ENCODE measurements at regions of chr1 and their contacts with region 1.

Region 1: GRCh38 chr1:156383023-156383422 is 14.0 kb downstream of the RHBG start:
- DNase-seq: peak; percentile 67 to 89
- H3K4me3 ChIP-seq: no peak overlapping the region
- H3K27ac ChIP-seq: no peak overlapping the region
- H3K4me1 ChIP-seq: peaks cover 4 to 7% (median 6%) of the 10 kb centered on the region in 4 experiments; a peak in 6 of 7 replicates
- H3K27me3 ChIP-seq: peaks cover 10 to 24% (median 22%) of the 10 kb centered on the region in 4 experiments
- CTCF ChIP-seq: peak in 2 of 3 experiments; percentile 94 to 100; a peak in 3 of 4 replicates
- EP300 ChIP-seq: no peak
- POLR2A ChIP-seq: no peak
- RAD21 ChIP-seq: peak; percentile 92 to 96

Region 2: DNA sequence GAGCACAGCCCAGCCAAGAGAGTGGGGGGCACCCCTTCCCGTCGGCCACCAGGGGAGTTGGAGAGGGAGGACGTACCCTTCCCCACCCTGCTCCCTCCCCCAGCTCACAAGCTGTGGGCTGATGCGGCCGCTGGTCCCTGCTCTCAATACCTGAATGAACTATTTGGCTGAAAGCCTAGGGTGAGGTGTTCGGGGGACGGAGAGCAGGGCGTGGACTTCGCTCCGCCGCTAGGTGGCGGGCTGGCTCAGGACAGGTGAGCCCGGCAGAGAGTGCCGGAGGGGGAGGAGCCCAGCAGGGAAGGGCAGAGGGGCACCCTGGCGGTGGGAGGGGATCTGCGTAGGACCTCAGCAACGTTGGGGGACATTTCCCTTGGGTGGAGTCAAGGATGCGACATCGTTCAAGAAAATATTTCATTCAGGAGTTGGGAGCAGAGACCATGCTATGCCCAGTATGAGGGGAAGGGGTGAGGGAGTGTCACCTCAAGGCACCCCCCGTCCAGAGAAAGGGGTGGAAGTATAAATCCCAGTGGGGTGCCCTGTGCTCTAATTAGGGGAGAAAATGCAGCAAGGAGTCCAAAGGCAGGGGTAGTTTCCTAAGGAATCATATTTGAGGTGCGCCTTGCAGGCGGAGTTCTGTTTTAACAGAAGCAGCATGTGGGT is 26.0 kb before region 1 on chr1:
- CTCF ChIA-PET with region 1: interaction called, 27 read pairs
- POLR2A ChIA-PET with region 1: interaction called, 3 read pairs
- DNase-seq: peak; percentile 84 to 92
- H3K4me3 ChIP-seq: peak overlapping the region; percentile 27 to 58 (median 42); a peak in 6 of 8 replicates
- H3K27ac ChIP-seq: no peak overlapping the region
- H3K4me1 ChIP-seq: peaks cover 0 to 4% (median 2%) of the 10 kb centered on the region in 4 experiments; a peak in 3 of 7 replicates
- H3K27me3 ChIP-seq: no peaks in the 10 kb centered on the region; a peak in 1 of 7 replicates
- CTCF ChIP-seq: peak; percentile 95 to 99 (median 95)
- EP300 ChIP-seq: peak in 1 of 2 experiments; percentile 40; a peak in 1 of 3 replicates
- POLR2A ChIP-seq: peak in 1 of 2 experiments; percentile 41; a peak in 1 of 3 replicates
- RAD21 ChIP-seq: peak; percentile 55 to 69

Region 3: DNA sequence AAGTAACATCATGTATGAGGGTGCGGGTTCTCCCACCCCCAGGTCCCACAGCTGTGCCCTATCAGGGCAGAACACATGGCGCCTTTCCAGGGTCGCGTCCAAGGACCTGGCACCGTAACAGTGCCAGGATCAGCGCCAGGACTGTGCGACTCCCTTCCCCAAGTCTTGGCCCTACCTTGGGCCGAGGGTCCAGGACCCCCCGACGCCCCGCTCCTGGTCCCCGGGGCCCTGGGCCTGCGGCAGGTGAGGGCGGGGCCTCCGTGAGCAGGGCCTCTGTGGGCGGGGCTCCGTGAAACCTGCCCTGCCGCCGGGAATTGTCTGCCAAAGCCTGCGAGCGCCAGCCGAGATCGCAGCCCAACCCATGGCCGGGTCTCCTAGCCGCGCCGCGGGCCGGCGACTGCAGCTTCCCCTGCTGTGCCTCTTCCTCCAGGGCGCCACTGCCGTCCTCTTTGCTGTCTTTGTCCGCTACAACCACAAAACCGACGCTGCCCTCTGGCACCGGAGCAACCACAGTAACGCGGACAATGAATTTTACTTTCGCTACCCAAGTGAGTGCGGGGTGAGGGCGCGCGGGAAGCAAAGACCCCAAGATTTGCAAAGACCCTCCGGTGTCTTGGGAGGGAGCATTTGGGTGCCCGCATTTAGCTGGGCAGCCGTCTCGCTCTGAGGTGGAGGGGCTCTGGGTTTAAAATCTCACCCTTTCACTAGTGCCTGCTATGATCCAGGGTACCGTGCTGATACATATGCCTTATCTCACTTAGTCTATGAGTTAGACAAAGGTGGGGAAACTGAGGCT is 13.9 kb before region 1 on chr1 and contains the start of gene RHBG:
- CTCF ChIA-PET with region 1: interaction called, 156 read pairs
- POLR2A ChIA-PET with region 1: interaction called, 7 read pairs
- DNase-seq: peak in 1 of 2 experiments; percentile 88
- H3K4me3 ChIP-seq: peak within 1 kb of the TSS; percentile 52 to 66 (median 56)
- H3K27ac ChIP-seq: no peak within 1 kb of the TSS
- H3K4me1 ChIP-seq: peaks cover 0 to 7% (median 4%) of the 10 kb centered on the region in 4 experiments; a peak in 5 of 7 replicates
- H3K27me3 ChIP-seq: peaks cover 0 to 14% (median 11%) of the 10 kb centered on the region in 4 experiments; a peak in 6 of 7 replicates
- CTCF ChIP-seq: no peak
- EP300 ChIP-seq: no peak
- POLR2A ChIP-seq: peak in 1 of 2 experiments; percentile 44; a peak in 1 of 3 replicates
- RAD21 ChIP-seq: no peak
- total RNA-seq, gene RHBG: 2.2 and 2.6 TPM in 2 replicates

Region 4: DNA sequence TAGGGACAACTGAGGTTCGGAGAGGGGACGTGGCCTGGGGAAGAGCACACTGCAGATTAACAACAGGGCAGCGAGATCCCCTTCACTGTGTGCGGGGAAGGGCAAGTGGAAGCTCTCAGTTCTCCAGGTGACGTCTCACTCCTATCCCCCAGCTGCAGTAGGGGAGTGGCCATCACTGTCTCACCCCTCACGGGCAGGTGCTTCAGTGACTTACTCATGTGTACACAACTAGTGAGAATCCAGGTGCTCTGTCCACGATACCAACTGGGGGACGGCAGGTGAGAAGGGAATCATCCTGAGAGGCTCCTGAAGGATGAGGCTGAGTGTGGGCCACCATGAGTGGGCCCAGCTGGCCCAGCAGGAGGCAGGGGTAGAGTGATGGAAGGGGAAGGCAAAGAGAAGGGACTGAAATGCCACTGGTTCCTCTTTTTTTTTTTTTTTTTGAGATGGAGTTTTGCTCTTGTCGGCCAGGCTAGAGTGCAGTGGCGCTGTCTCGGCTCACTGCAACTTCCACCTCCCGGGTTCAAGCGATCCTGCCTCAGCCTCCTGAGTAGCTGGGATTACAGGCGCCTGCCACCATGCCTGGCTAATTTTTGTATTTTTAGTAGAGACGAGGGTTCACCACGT is 11.9 kb after region 1 on chr1:
- CTCF ChIA-PET with region 1: interaction called, 172 read pairs
- POLR2A ChIA-PET with region 1: interaction called, 3 read pairs
- DNase-seq: no peak
- H3K4me3 ChIP-seq: no peak overlapping the region
- H3K27ac ChIP-seq: no peak overlapping the region
- H3K4me1 ChIP-seq: peaks cover 15 to 36% (median 26%) of the 10 kb centered on the region in 4 experiments
- H3K27me3 ChIP-seq: peaks cover 0 to 24% (median 19%) of the 10 kb centered on the region in 4 experiments; a peak in 6 of 7 replicates
- CTCF ChIP-seq: no peak
- EP300 ChIP-seq: no peak
- POLR2A ChIP-seq: no peak
- RAD21 ChIP-seq: no peak

Region 5: DNA sequence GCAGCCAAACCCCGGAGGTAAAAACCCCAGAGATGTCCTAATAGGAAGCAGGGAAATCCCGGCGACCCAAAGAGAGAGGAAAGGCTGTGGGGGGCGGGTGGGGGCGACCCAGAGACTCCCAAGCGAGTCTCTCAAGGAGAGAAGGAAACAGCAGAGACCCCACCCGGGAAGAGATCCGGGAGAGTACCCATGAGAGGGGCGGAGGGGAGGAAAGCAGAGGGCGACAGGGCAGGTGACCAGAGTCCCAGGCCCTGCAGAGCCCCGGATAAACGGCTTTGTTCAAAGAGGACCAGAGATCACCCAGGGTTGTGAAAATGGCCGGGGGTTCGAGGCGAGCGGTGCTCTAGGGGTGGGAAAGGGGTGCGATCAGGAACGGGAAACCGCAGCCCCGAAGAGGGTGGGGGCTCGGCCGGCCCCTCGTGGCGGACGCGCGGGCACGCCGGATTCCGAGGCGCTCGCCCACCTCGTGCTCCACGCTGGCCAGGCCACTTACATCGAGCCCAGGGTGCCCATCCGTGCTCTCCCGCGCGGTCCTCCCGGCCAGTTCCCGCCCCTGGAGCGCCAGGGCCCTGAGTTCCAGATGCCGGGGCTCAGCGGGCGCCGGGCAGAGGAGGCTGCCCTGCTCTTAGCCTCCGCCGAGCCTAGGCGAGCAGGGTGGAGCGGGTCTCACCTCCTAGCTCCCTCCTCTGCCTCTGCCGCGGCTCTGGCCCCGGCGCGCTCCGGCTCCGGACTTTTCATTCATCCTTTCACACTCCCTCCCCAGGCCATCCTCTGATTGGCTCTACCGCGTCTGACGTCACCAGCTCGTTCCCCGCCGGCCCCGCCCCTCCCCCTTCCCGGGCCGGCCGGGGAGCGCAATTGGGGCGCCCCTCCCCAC is 38.3 kb after region 1 on chr1:
- CTCF ChIA-PET with region 1: interaction called, 517 read pairs
- POLR2A ChIA-PET with region 1: interaction called, 26 read pairs
- DNase-seq: peak in 1 of 2 experiments; percentile 93
- H3K4me3 ChIP-seq: peak overlapping the region; percentile 35 to 61 (median 45)
- H3K27ac ChIP-seq: peak overlapping the region; percentile 4; the same call in 1 of the 2 replicates
- H3K4me1 ChIP-seq: peaks cover 10 to 26% (median 16%) of the 10 kb centered on the region in 4 experiments
- H3K27me3 ChIP-seq: peaks cover 43 to 73% (median 65%) of the 10 kb centered on the region in 4 experiments
- CTCF ChIP-seq: no peak
- EP300 ChIP-seq: peak in 1 of 2 experiments; percentile 9; a peak in 1 of 3 replicates
- POLR2A ChIP-seq: peak; percentile 69 to 87
- RAD21 ChIP-seq: no peak

Region 6: DNA sequence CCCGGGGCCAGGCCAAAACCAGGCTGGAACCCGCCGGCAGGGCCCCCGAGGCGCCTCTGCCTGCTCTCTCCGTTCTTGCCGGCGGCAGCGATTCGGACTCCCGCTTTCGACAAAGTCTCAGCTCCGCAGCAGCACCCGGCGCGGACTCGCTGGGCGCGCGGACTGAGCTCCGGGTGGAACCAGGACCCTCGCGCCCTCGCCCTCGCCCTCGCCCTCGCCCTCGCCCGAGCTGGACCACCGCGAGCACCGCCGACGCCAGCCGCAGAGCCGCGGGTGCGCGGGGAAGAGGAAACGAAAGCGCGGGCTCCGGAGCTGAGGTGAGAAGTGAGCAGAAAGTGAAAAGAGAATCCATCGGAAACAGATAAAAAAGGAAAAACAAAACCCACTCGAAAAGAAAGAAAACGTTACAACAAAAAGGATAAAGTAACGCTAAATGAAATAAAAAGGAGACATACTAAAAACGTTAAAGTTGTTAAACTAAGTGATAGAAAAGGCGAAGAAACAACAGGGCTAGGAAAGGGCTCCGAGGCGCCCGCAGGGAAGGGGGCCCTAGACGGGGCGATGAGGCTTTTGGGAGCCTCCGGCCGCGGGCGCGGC is 52.6 kb after region 1 on chr1:
- CTCF ChIA-PET with region 1: interaction called, 217 read pairs
- POLR2A ChIA-PET with region 1: interaction called, 8 read pairs
- DNase-seq: no peak
- H3K4me3 ChIP-seq: peak overlapping the region in 1 of 4 experiments; percentile 39; a peak in 2 of 8 replicates
- H3K27ac ChIP-seq: no peak overlapping the region
- H3K4me1 ChIP-seq: peaks cover 13 to 44% (median 17%) of the 10 kb centered on the region in 4 experiments
- H3K27me3 ChIP-seq: peaks cover 86 to 100% (median 98%) of the 10 kb centered on the region in 4 experiments
- CTCF ChIP-seq: no peak
- EP300 ChIP-seq: no peak
- POLR2A ChIP-seq: no peak
- RAD21 ChIP-seq: no peak

Region 7: DNA sequence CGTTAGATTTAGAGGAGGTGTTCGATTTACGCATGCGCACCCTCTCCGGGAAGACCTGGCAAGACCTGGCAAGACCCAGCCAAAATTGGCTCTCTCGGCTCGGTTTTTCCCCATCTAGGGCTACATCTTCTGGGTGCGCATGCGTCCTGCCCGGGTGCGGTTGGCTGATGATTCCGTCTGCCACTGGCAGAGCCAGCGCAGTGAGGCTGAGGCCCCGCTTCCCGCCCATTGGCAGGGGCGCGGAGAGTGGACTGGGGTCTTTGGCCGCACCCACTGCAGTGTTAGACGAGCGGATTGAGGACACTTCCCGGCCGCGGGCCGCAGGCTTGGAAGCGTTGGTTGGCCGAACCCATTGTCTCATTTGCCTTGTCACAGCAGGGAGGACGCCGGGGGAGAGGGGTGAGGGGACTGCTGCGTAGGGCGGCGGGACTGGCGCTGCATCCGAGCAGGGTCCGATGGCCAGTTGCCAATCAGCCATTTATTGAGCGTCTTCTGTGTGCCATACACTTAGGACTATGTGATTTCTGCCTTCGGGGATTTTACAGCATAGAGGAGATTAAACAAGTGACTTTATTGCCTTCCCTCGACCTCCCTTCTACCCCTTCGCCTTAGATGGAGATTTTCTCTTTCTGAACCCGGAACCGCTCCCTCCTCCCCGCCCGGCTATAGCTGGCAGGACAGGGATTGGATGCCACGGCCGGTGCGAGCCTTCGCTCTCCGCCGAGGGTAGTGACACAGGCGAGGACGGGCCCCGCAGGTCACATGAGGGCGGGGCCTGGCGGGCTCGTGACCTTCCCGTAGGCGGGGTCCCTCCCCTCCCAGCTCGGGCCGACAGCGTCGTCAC is 73.8 kb after region 1 on chr1:
- CTCF ChIA-PET with region 1: interaction called, 574 read pairs
- POLR2A ChIA-PET with region 1: interaction called, 4 read pairs
- DNase-seq: peak; percentile 95 to 98
- H3K4me3 ChIP-seq: peak overlapping the region; percentile 57 to 83 (median 69)
- H3K27ac ChIP-seq: peak overlapping the region; percentile 77
- H3K4me1 ChIP-seq: peaks cover 0 to 5% (median under 1%) of the 10 kb centered on the region in 4 experiments; a peak in 2 of 7 replicates
- H3K27me3 ChIP-seq: no peaks in the 10 kb centered on the region
- CTCF ChIP-seq: no peak
- EP300 ChIP-seq: no peak
- POLR2A ChIP-seq: peak; percentile 47 to 87
- RAD21 ChIP-seq: no peak

Measured in H1 (cell line).